Naive thymus-derived CD4-positive, alpha-beta T cell (primary cell): ENCODE measurements at regions of chr4 and their contacts with region 1.

Region 1: GRCh38 chr4:32499171-32499570 is 1779.0 kb downstream of the PCDH7 start:
- DNase-seq: no peak
- ATAC-seq: no peak
- H3K4me3 ChIP-seq: no peak overlapping the region
- H3K4me3 Mint-ChIP-seq: no peak overlapping the region
- H3K27ac ChIP-seq: no peak overlapping the region
- H3K27ac Mint-ChIP-seq: no peak overlapping the region
- H3K4me1 ChIP-seq: no peaks in the 10 kb centered on the region
- H3K4me1 Mint-ChIP-seq: no peaks in the 10 kb centered on the region
- H3K27me3 ChIP-seq: no peaks in the 10 kb centered on the region
- H3K27me3 Mint-ChIP-seq: no peaks in the 10 kb centered on the region

Region 2: DNA sequence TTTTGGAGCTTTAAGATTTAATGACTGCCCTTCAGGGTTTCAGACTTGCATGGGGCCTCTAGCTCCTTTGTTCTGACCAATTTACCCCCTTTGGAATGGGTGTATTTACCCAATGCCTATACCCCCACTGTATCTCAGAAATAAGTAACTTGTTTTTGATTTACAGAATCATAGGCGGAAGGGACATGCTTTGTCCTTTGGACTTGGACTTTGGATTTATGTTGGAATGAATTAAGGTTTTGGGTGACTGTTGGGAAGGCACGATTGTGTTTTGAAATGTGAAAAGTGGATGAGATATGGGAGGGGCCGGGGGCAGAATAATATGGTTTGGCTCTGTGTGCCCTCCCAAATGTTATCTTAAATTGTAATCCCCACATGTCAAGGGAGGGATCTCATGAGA is 45.7 kb after region 1 on chr4:
- CTCF ChIA-PET with region 1: no interaction called
- POLR2A ChIA-PET with region 1: no interaction called
- intact Hi-C with region 1: loop called in 1 of 2 experiments (anchors 5 kb)
- DNase-seq: no peak
- ATAC-seq: no peak
- H3K4me3 ChIP-seq: no peak overlapping the region
- H3K4me3 Mint-ChIP-seq: no peak overlapping the region
- H3K27ac ChIP-seq: no peak overlapping the region
- H3K27ac Mint-ChIP-seq: no peak overlapping the region
- H3K4me1 ChIP-seq: no peaks in the 10 kb centered on the region
- H3K4me1 Mint-ChIP-seq: no peaks in the 10 kb centered on the region
- H3K27me3 ChIP-seq: no peaks in the 10 kb centered on the region
- H3K27me3 Mint-ChIP-seq: no peaks in the 10 kb centered on the region

Region 3: DNA sequence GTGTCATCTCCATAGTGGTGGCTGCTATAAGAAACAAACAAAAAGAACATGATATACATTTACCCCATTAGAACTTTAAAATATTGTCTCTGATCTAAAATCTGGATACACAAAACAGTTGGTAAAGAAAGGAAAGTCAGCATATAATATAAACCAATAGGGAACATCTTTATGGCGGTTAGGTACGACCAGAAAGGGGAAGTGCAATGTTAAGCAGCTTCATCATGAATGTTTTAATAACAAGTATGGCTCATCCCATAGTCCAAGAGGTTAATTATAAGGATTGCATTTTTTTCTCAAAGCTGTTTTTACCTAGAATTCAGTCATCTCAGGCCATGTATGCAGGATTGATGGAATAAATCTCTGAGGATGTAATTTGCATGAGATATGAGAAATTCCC is 90.7 kb after region 1 on chr4:
- CTCF ChIA-PET with region 1: no interaction called
- POLR2A ChIA-PET with region 1: no interaction called
- intact Hi-C with region 1: no loop called
- DNase-seq: no peak
- ATAC-seq: no peak
- H3K4me3 ChIP-seq: no peak overlapping the region
- H3K4me3 Mint-ChIP-seq: no peak overlapping the region
- H3K27ac ChIP-seq: no peak overlapping the region
- H3K27ac Mint-ChIP-seq: no peak overlapping the region
- H3K4me1 ChIP-seq: no peaks in the 10 kb centered on the region
- H3K4me1 Mint-ChIP-seq: no peaks in the 10 kb centered on the region
- H3K27me3 ChIP-seq: no peaks in the 10 kb centered on the region
- H3K27me3 Mint-ChIP-seq: no peaks in the 10 kb centered on the region